Heart left ventricle (tissue), 16 donors: ENCODE measurements at regions of chr10 and their contacts with region 1.

Region 1: GRCh38 chr10:68973975-68974374 is 14.6 kb upstream of the KIFBP start:
- DNase-seq: no peak
- ATAC-seq: no peak
- H3K4me3 ChIP-seq: no peak overlapping the region
- H3K27ac ChIP-seq: no peak overlapping the region
- H3K4me1 ChIP-seq: no peaks in the 10 kb centered on the region
- H3K27me3 ChIP-seq: no peaks in the 10 kb centered on the region
- CTCF ChIP-seq: no peak
- POLR2A ChIP-seq: no peak

Region 2: GRCh38 chr10:68848793-68849192 is 125.2 kb before region 1 on chr10:
- intact Hi-C with region 1: no loop called
- DNase-seq: no peak
- ATAC-seq: no peak
- H3K4me3 ChIP-seq: no peak overlapping the region
- H3K27ac ChIP-seq: no peak overlapping the region
- H3K4me1 ChIP-seq: no peaks in the 10 kb centered on the region
- H3K27me3 ChIP-seq: no peaks in the 10 kb centered on the region
- CTCF ChIP-seq: no peak
- POLR2A ChIP-seq: no peak

Region 3: DNA sequence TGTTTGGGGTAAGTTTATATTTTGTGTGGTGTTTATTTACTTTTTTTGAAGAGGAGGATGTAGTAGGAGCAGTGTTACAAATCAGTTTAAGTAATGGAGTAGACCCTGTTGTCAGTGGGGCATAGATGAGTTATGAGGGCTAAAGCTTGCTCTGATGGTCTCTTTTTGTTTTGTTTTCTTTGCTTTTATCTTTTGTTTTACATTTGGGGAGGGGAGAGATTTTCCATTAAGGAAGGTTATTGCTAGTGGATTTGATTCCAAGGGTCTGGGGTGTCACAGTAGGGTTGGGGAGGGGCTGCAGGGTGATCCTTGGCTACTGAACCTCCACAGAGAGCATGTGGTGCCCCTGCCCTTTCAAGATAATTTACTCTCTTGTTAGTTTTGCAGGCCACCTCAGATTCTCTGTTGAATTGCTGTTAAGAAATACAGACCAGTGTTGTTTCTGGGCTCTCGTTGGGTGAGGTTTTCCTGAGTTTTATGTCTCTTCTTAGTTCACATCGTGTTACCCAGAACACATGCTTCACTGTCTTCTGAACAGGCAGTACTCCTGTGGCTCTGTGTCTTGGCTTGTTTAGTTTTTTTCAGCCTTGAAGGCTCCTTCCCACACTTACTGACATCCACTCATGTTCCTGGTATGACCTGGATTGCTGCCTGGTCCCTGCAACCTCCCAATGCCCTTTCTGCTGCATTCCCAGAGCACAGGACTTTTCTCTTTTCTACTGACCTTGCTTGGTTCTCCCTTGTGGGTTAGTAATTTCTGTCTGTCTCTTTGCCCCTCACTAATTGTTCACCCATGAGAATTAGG is 18.9 kb after region 1 on chr10:
- intact Hi-C with region 1: no loop called
- DNase-seq: peak in 4 of 5 donors; percentile 36 to 66 (median 52)
- ATAC-seq: peak in 3 of 4 donors; percentile 7 to 37 (median 32)
- H3K4me3 ChIP-seq: peak overlapping the region in 1 of 12 donors; percentile 2
- H3K27ac ChIP-seq: peak overlapping the region; percentile 31 to 80 (median 65)
- H3K4me1 ChIP-seq: peaks cover 4 to 69% (median 56%) of the 10 kb centered on the region in 12 donors
- H3K27me3 ChIP-seq: no peaks in the 10 kb centered on the region
- CTCF ChIP-seq: no peak
- POLR2A ChIP-seq: no peak

Region 4: DNA sequence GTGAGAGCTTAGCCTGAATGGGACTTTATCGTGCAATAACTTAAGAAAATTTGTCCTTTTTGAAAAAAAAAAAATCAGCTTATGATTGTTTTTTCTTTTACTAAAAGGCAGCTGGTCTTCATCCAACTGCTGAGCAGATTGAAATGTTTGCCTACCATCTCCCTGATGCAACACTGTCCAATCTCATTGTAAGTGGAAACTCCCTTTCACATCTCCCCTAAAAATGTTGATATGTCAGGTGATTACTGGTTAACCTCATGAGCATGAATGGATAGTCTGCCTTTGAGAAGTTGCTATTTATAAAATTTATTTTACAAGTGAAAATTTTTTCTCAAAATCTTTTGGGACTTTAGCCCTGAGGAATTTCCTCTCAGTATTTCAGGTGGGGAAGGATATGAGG is 228.4 kb after region 1 on chr10:
- intact Hi-C with region 1: loop called in 1 of 10 experiments (anchors 10 kb)
- DNase-seq: no peak
- ATAC-seq: no peak
- H3K4me3 ChIP-seq: no peak overlapping the region
- H3K27ac ChIP-seq: peak overlapping the region in 1 of 12 donors; percentile 64
- H3K4me1 ChIP-seq: no peaks in the 10 kb centered on the region
- H3K27me3 ChIP-seq: no peaks in the 10 kb centered on the region
- CTCF ChIP-seq: no peak
- POLR2A ChIP-seq: no peak

Region 5: GRCh38 chr10:69222157-69223027 is 248.4 kb after region 1 on chr10:
- intact Hi-C with region 1: no loop called
- DNase-seq: no peak
- ATAC-seq: peak in 3 of 4 donors; percentile 24 to 47 (median 36)
- H3K4me3 ChIP-seq: peak overlapping the region in 1 of 12 donors; percentile 16
- H3K27ac ChIP-seq: peak overlapping the region in 1 of 12 donors; percentile 69
- H3K4me1 ChIP-seq: peaks cover 0 to 31% (median 0%) of the 10 kb centered on the region in 12 donors
- H3K27me3 ChIP-seq: peaks cover 0 to 6% (median 0%) of the 10 kb centered on the region in 9 donors
- CTCF ChIP-seq: peak; percentile 35 to 77 (median 61)
- POLR2A ChIP-seq: no peak